Activated T-helper 1 cell treated with anti-CD3 and anti-CD28 coated beads, Interleukin-12 subunit alpha, Interleukin-12 subunit beta, Interleukin-2, Interleukin-4 antibody, amounts not matched to agents 30 ng/mL and 10 ng/mL and 1 ng/mL, durations not matched to agents 14 hours and 24 hours and 36 hours (primary cell): ENCODE measurements at regions of chr9 and their contacts with region 1.

Region 1: GRCh38 chr9:121121582-121122087 is 46.9 kb downstream of the CNTRL start:
- DNase-seq: peak; percentile 96
- H3K4me3 Mint-ChIP-seq: peak overlapping the region; percentile 75
- H3K27ac Mint-ChIP-seq: peak overlapping the region; percentile 78
- H3K4me1 Mint-ChIP-seq: peaks cover 50% of the 10 kb centered on the region
- H3K27me3 Mint-ChIP-seq: no peaks in the 10 kb centered on the region

Region 2: DNA sequence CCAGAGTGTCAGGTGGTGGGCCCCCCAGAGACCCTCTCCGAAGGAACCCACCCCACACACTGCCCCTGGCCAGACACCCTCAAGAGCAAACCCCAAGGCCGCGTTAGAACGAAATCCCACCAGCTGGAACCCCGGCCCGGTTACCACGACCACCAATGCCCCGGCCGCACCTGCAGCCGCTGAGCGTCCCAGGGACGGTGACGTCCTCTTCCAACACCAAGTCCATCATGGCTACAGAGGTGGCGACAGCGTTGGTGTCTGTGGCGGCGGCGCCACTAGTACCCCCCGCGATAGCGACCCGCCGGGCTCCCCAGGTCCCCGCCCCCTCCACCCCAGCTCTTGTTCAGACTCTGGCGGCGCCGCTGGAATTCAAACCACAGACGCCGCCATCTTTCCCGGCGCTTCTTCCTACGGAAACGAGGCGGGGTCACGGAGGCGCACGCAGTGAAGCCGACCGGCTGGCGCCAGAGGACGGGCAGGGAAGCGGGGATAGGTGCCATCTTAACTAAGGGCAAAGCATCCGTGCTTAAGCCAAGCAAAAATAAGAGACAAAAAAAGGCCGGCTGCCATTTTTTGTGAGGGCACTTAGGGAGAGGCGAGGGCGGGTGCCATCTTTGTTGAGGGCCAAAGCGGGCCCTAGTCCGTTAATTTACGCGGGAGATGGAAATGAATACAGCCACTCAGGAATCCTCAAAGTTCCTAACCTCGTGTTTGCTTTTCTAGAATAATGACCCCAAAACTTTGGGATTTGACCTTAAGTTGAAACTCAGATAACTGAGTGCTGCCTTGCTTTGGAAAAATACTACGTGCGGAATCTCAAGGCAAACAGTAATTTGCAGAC is 541.7 kb before region 1 on chr9 and contains the start of gene CDK5RAP2:
- intact Hi-C with region 1: loop called (anchors 1 kb)
- DNase-seq: peak; percentile 91
- H3K4me3 Mint-ChIP-seq: peak within 1 kb of the TSS; percentile 97
- H3K27ac Mint-ChIP-seq: peak within 1 kb of the TSS; percentile 95
- H3K4me1 Mint-ChIP-seq: peaks cover 54% of the 10 kb centered on the region
- H3K27me3 Mint-ChIP-seq: no peaks in the 10 kb centered on the region
- total RNA-seq, gene CDK5RAP2: 60.3 and 66.7 TPM in 2 replicates

Region 3: GRCh38 chr9:120868676-120869359 is 252.8 kb before region 1 on chr9:
- intact Hi-C with region 1: loop called (anchors 1 kb)
- DNase-seq: peak; percentile 93
- H3K4me3 Mint-ChIP-seq: peak overlapping the region; percentile 88
- H3K27ac Mint-ChIP-seq: peak overlapping the region; percentile 91
- H3K4me1 Mint-ChIP-seq: peaks cover 48% of the 10 kb centered on the region
- H3K27me3 Mint-ChIP-seq: no peaks in the 10 kb centered on the region

Region 4: DNA sequence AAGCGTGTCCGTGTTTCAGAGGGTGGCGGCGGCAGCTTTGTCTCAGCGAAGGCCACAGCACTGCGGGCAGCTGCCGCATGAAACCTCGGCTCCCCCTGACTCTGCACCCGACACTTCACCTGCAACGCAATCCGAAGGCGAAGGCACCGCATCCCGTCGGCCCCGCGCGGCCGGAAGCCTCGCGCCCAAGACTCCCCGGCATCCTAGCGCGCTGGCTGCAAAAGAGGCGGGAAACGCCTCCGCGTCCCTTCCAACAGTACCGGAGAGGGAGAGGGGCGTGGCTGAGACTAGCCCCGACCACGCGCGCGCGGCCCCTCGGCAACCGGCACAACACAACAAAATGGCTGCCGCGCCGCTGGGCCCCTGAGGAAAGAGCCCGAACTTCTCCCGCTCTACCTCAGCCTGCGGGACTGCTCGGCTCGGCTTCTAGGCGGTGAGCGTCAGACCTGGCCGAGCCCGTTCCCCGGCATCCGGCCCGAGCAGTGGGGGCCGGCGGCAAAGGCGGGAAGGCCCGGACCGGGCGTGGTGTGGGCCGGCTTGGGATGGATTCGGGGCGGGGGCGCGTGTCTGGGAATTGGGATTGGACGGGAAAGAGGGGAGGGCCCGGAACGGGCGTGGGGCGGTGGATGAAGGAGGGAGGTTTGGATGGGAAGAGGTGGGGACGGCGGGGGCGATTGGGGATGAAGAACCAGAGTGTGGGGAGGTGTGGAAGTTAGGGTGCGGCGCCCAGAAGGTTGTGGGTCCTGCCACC is 46.8 kb before region 1 on chr9 and contains the start of gene CNTRL:
- intact Hi-C with region 1: loop called (anchors 1 kb)
- DNase-seq: peak; percentile 90
- H3K4me3 Mint-ChIP-seq: peak within 1 kb of the TSS; percentile 100
- H3K27ac Mint-ChIP-seq: peak within 1 kb of the TSS; percentile 91
- H3K4me1 Mint-ChIP-seq: peaks cover 57% of the 10 kb centered on the region
- H3K27me3 Mint-ChIP-seq: no peaks in the 10 kb centered on the region
- total RNA-seq, gene CNTRL: 69.9 and 74.2 TPM in 2 replicates

Region 5: GRCh38 chr9:121156263-121156731 is 34.7 kb after region 1 on chr9:
- intact Hi-C with region 1: loop called (anchors 1 kb)
- DNase-seq: peak; percentile 6
- H3K4me3 Mint-ChIP-seq: peak overlapping the region; percentile 50
- H3K27ac Mint-ChIP-seq: peak overlapping the region; percentile 92
- H3K4me1 Mint-ChIP-seq: peaks cover 50% of the 10 kb centered on the region
- H3K27me3 Mint-ChIP-seq: no peaks in the 10 kb centered on the region

Region 6: GRCh38 chr9:121369595-121370265 is 248.1 kb after region 1 on chr9 and contains the start of gene STOM:
- intact Hi-C with region 1: loop called (anchors 2 kb)
- DNase-seq: no peak
- H3K4me3 Mint-ChIP-seq: peak within 1 kb of the TSS; percentile 87
- H3K27ac Mint-ChIP-seq: peak within 1 kb of the TSS; percentile 96
- H3K4me1 Mint-ChIP-seq: peaks cover 77% of the 10 kb centered on the region
- H3K27me3 Mint-ChIP-seq: no peaks in the 10 kb centered on the region
- total RNA-seq, gene STOM: 51.1 and 51.7 TPM in 2 replicates